Panc1 (cell line): ENCODE measurements at regions of chr20 and their contacts with region 1.

Region 1: DNA sequence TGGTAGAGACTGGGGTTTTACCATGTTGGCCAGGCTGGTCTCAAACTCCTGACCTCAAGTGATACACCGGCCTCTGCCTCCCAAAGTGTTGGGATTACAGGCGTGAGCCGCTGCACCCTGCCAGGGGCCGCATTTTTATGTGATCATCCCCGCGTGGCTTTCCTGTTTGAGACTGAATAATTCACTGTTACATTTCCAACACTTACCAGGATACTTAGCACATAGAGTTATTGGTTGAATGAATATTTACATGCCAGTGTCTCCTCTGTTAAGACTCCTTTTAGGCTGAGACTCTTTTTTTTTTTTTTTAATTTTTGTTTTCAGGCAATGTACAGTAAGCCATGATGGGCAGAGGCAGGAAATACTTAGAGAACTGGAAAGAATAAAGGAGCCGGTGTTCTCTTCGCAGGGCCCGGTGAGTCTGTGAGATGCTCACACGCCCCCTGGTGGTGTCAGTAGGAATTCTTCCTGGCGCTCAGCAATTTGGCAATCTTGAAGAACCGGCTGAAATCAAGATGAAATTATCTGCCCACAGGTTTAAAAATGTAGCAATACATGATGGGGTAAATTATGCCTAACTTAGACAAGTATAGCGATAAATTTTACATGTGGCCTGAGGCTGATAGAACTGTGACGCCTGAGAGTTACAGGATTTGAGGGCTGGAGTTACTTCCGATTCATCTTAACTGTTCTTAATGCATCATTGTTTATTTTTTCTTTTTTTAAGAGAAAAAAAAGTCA is 7.6 kb upstream of the RNF114 start:
- DNase-seq: peak; percentile 62
- ATAC-seq: peak; percentile 94
- H3K4me3 ChIP-seq: no peak overlapping the region
- H3K27ac ChIP-seq: no peak overlapping the region
- H3K4me1 ChIP-seq: no peaks in the 10 kb centered on the region
- H3K27me3 ChIP-seq: no peaks in the 10 kb centered on the region
- CTCF ChIP-seq: peak; percentile 97

Region 2: DNA sequence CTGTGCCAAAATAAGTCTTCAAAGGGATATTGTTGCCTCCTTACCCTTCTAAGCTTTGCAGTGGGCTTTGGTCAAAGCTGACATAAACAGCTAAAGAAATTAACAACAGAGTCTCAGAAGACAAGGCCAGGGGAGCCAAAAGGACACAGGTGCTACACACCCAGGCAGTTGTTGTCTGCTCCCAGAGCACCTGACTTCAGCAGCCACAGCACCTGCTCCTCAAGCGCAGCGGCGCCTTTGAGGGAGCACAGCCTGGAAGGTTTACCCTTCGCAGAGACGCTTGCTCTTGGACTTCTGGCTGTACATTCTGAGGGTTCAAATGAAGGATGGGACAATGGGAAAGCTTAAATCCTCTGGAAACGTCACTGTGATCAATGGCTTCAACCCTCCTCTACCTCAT is 231.5 kb before region 1 on chr20:
- CTCF ChIA-PET with region 1: no interaction called
- POLR2A ChIA-PET with region 1: interaction called, 13 read pairs
- in situ Hi-C with region 1: no loop called
- intact Hi-C with region 1: no loop called
- DNase-seq: no peak
- ATAC-seq: no peak
- H3K4me3 ChIP-seq: no peak overlapping the region
- H3K27ac ChIP-seq: peak overlapping the region; percentile 19; the same call in 1 of the 2 replicates
- H3K4me1 ChIP-seq: peaks cover 59% of the 10 kb centered on the region
- H3K27me3 ChIP-seq: no peaks in the 10 kb centered on the region
- CTCF ChIP-seq: no peak

Region 3: GRCh38 chr20:49915378-49916145 is 13.0 kb before region 1 on chr20 and contains the start of gene SPATA2:
- CTCF ChIA-PET with region 1: interaction called, 5 read pairs
- POLR2A ChIA-PET with region 1: interaction called, 10 read pairs
- in situ Hi-C with region 1: no loop called
- intact Hi-C with region 1: no loop called
- DNase-seq: peak; percentile 81
- ATAC-seq: peak; percentile 95
- H3K4me3 ChIP-seq: peak within 1 kb of the TSS; percentile 76 to 89
- H3K27ac ChIP-seq: peak within 1 kb of the TSS; percentile 95
- H3K4me1 ChIP-seq: peaks cover 15% of the 10 kb centered on the region
- H3K27me3 ChIP-seq: no peaks in the 10 kb centered on the region
- CTCF ChIP-seq: no peak
- total RNA-seq, gene SPATA2: 8.3 TPM